CD14-positive monocyte (primary cell): ENCODE measurements at regions of chr14 and their contacts with region 1.

Region 1: DNA sequence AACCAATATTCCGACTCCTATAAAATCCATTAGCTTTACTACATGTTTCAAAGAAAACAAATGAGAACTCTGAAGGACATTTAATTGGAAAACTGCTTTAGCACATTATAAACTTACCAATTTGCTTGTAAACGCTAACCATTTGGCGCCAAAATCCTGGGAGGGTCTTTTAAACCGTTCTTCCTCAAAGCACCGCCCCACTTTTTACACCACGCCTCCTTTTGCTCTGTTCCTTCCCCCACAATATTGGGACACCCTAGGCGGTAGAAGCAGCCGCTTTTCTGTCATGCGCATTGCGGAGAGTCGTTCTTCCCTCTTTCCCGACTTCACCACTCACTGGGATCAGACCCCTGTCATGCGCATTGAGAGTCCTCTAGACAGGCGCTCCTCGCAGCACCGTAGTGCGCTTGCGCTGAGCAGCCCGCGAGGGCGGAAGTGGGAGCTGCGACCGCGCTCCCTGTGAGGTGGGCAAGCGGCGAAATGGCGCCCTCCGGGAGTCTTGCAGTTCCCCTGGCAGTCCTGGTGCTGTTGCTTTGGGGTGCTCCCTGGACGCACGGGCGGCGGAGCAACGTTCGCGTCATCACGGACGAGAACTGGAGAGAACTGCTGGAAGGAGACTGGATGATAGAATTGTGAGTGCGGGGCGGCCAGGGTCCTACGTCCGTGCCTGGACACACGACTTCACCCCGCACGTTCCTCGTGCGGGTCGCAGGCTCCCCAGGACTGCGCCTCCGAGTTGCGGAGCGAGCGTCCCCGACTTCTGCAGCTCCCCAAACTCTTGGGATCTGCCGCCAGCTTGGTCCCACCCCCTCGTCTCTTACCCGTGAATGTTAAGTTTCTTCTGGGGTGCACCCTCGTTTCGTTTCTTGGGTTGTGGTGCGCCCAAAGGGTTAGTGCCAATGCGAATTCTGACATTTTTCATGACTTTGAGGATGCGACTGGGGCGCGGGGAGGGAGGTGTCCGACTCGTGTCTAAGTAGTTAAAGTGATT is at the start of gene TMX1:
- DNase-seq: peak; percentile 96 to 100 (median 98)
- H3K4me3 ChIP-seq: peak within 1 kb of the TSS; percentile 69 to 90 (median 90)
- H3K4me3 Mint-ChIP-seq: no peak within 1 kb of the TSS
- H3K27ac ChIP-seq: peak within 1 kb of the TSS; percentile 67 to 94
- H3K27ac Mint-ChIP-seq: no peak within 1 kb of the TSS
- H3K4me1 ChIP-seq: peaks cover 16 to 35% of the 10 kb centered on the region in 2 donors
- H3K4me1 Mint-ChIP-seq: peaks cover 5% of the 10 kb centered on the region
- H3K27me3 ChIP-seq: no peaks in the 10 kb centered on the region
- H3K27me3 Mint-ChIP-seq: no peaks in the 10 kb centered on the region
- CTCF ChIP-seq: no peak
- polyA plus RNA-seq, gene TMX1: 9.7 to 76.8 (median 62.6) TPM

Region 2: GRCh38 chr14:50954811-50955372 is 285.2 kb before region 1 on chr14:
- intact Hi-C with region 1: loop called in 1 of 2 experiments (anchors 1 kb)
- DNase-seq: peak; percentile 37 to 63 (median 62)
- H3K4me3 ChIP-seq: no peak overlapping the region
- H3K4me3 Mint-ChIP-seq: no peak overlapping the region
- H3K27ac ChIP-seq: peak overlapping the region; percentile 81 to 88
- H3K27ac Mint-ChIP-seq: peak overlapping the region; percentile 79 to 97 (median 93)
- H3K4me1 ChIP-seq: peaks cover 32 to 36% of the 10 kb centered on the region in 2 donors
- H3K4me1 Mint-ChIP-seq: peaks cover 37% of the 10 kb centered on the region
- H3K27me3 ChIP-seq: no peaks in the 10 kb centered on the region
- H3K27me3 Mint-ChIP-seq: no peaks in the 10 kb centered on the region
- CTCF ChIP-seq: peak; percentile 73